CD8-positive, alpha-beta T cell (primary cell): ENCODE measurements at regions of chr3 and their contacts with region 1.

Region 1: DNA sequence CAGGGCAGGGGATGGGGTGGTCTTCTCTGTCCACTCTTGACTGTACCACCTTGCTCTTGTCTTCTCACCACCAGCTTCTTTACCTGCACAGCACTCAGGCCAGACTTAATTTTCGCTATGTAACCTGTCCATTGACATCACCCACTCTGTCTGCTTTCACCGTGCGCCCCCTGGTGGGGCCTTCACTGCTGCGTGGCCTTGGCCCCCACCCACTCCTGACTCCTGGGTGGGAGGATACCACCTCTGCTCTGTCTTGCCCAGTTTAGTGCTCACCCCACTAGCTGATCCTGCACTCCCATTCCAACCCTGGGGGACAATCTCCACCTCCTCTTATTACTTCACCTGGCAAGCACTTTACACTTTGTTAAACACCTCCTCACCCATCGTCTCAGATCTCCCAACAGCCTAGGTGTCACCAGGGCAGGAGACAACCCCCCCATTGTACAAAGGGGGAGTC is 17.7 kb downstream of the PTH1R start:
- DNase-seq: peak; percentile 61 to 87 (median 79)
- ATAC-seq: peak; percentile 91
- H3K4me3 ChIP-seq: no peak overlapping the region
- H3K4me3 Mint-ChIP-seq: no peak overlapping the region
- H3K27ac ChIP-seq: no peak overlapping the region
- H3K27ac Mint-ChIP-seq: no peak overlapping the region
- H3K4me1 ChIP-seq: no peaks in the 10 kb centered on the region
- H3K4me1 Mint-ChIP-seq: peaks cover 12% of the 10 kb centered on the region
- H3K27me3 ChIP-seq: peaks cover 4 to 18% of the 10 kb centered on the region in 2 experiments
- H3K27me3 Mint-ChIP-seq: peaks cover 54% of the 10 kb centered on the region
- CTCF ChIP-seq: peak; percentile 71

Region 2: DNA sequence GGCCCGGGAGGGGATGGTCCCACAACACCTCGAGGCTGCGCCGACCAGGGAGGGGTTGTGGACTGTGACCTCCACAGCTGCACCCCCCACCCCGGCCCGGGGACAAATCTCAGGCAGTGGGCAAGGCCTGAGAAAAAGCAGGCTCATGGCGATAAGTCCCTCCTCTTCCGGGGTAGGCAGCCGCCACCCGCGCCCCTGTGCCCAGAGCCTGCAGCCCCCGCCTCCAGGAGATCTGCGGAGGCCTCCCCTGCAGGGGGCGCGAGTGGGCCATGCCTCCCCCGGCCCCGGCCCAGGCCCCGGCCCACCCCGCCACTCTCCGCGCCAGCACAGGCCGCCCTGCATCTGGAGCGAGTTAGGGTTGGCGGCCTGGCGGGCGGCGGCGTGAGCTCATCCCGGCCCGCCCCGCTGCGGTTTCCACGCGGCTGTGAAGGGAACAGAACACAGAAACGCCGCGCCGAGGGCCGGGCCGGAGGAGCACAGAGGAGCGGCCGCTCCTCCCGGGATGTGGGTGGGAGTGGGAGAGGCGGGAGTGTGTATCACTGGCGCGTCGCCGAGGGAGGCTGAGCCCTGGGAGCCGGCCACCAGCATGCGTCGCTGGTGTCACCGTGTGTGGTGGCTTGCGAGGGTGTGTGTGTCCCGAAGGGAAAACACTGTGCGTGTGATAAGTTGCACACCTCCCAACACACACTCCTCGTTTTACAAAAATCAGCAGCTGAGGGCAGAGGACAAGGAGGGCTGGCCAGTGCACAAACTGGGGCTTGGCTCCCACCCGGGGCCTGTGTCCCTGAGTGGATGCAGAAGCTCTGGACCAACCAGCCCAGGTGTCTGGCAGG is 49.2 kb before region 1 on chr3:
- CTCF ChIA-PET with region 1: interaction called, 7 read pairs
- POLR2A ChIA-PET with region 1: no interaction called
- intact Hi-C with region 1: loop called (anchors 1 kb)
- DNase-seq: peak; percentile 55 to 86 (median 79)
- ATAC-seq: peak; percentile 95
- H3K4me3 ChIP-seq: peak overlapping the region; percentile 64 to 82
- H3K4me3 Mint-ChIP-seq: peak overlapping the region; percentile 85
- H3K27ac ChIP-seq: peak overlapping the region; percentile 32 to 36
- H3K27ac Mint-ChIP-seq: peak overlapping the region; percentile 55
- H3K4me1 ChIP-seq: peaks cover 10% of the 10 kb centered on the region
- H3K4me1 Mint-ChIP-seq: peaks cover 11% of the 10 kb centered on the region
- H3K27me3 ChIP-seq: no peaks in the 10 kb centered on the region
- H3K27me3 Mint-ChIP-seq: no peaks in the 10 kb centered on the region
- CTCF ChIP-seq: peak; percentile 68

Region 3: GRCh38 chr3:46882377-46883053 is 12.7 kb before region 1 on chr3:
- CTCF ChIA-PET with region 1: interaction called, 14 read pairs
- POLR2A ChIA-PET with region 1: no interaction called
- intact Hi-C with region 1: no loop called
- DNase-seq: no peak
- ATAC-seq: peak; percentile 26
- H3K4me3 ChIP-seq: peak overlapping the region; percentile 38 to 43
- H3K4me3 Mint-ChIP-seq: peak overlapping the region; percentile 76
- H3K27ac ChIP-seq: no peak overlapping the region
- H3K27ac Mint-ChIP-seq: no peak overlapping the region
- H3K4me1 ChIP-seq: no peaks in the 10 kb centered on the region
- H3K4me1 Mint-ChIP-seq: peaks cover 13% of the 10 kb centered on the region
- H3K27me3 ChIP-seq: peaks cover 18 to 19% of the 10 kb centered on the region in 2 experiments
- H3K27me3 Mint-ChIP-seq: peaks cover 34% of the 10 kb centered on the region
- CTCF ChIP-seq: no peak